ENCODE measurements at regions of chr10 and their contacts with region 1.

Region 1: GRCh38 chr10:95588025-95588424 is 26.9 kb upstream of the SORBS1 start:
- DNase-seq: no peak
- H3K4me3 ChIP-seq: no peak overlapping the region
- H3K27ac ChIP-seq: no peak overlapping the region
- H3K4me1 ChIP-seq: no peaks in the 10 kb centered on the region
- H3K27me3 ChIP-seq: peaks cover 12 to 17% of the 10 kb centered on the region in 2 experiments
- CTCF ChIP-seq: no peak
- POLR2A ChIP-seq: no peak

Region 2: GRCh38 chr10:95406651-95407280 is 181.3 kb before region 1 on chr10:
- CTCF ChIA-PET with region 1: no interaction called
- POLR2A ChIA-PET with region 1: interaction called, 3 read pairs
- dilution Hi-C with region 1: loop called (anchors 25 kb)
- intact Hi-C with region 1: no loop called
- DNase-seq: no peak
- H3K4me3 ChIP-seq: no peak overlapping the region
- H3K27ac ChIP-seq: no peak overlapping the region
- H3K4me1 ChIP-seq: no peaks in the 10 kb centered on the region
- H3K27me3 ChIP-seq: no peaks in the 10 kb centered on the region
- CTCF ChIP-seq: no peak
- POLR2A ChIP-seq: no peak

Region 3: GRCh38 chr10:95618126-95618525 is 30.1 kb after region 1 on chr10:
- CTCF ChIA-PET with region 1: no interaction called
- POLR2A ChIA-PET with region 1: no interaction called
- dilution Hi-C with region 1: no loop called
- intact Hi-C with region 1: no loop called
- DNase-seq: no peak
- H3K4me3 ChIP-seq: no peak overlapping the region
- H3K27ac ChIP-seq: no peak overlapping the region
- H3K4me1 ChIP-seq: no peaks in the 10 kb centered on the region
- H3K27me3 ChIP-seq: no peaks in the 10 kb centered on the region
- CTCF ChIP-seq: no peak
- POLR2A ChIP-seq: no peak